ENCODE measurements at regions of chr6 and their contacts with region 1.

Region 1: GRCh38 chr6:142301651-142302370 is at the start of gene ADGRG6:
- DNase-seq: peak; percentile 82
- ATAC-seq: peak; percentile 92
- H3K4me3 ChIP-seq: peak within 1 kb of the TSS; percentile 85 to 95 (median 93)
- H3K27ac ChIP-seq: peak within 1 kb of the TSS; percentile 84
- H3K4me1 ChIP-seq: peaks cover 64% of the 10 kb centered on the region
- H3K27me3 ChIP-seq: no peaks in the 10 kb centered on the region; a peak in 1 of 5 replicates
- CTCF ChIP-seq: peak; percentile 84
- EP300 ChIP-seq: 0 out of 4 replicates have a peak, but pooled peaks of 1 of the 2 experiments have one; percentile 26
- POLR2A ChIP-seq: peak; percentile 33 to 87; a peak in 3 of 4 replicates
- RAD21 ChIP-seq: peak; percentile 96
- total RNA-seq, gene ADGRG6: 83.6 and 129 TPM in 2 replicates

Region 2: DNA sequence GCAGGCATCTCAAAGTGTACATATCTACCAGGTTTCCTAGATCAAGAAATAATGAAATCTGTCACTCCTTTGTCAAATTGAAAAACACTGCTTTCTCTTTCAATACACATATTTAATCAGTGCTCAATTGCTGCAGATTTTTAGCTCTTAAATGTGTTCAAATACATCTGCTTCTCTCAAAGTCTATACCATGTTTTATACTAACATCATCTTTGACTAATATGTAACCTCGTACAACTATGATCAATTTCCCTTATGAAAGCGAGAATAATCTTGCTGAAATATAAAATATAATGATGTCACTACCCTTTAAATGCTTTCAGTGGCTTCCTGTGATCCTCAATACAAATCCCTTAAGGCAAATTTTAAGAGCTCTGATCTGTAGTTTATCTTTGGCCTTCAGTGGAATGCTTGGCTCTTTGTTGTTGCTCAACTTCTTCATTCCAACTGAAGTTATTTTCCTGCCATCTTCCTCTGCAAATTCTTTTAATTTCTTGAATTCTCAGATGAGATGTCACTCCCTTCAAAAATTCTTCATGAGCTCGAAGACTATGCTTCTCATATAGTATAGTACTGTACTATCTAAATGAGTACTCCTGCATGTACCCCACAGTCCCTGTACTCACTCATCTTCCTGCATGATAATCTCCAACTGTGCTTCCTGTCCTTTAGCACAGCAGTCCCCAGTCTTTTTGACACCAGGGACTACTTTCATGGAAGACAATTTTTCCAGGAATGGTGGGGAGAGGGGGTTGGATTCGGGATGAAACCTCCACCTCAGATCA is 714.1 kb before region 1 on chr6:
- CTCF ChIA-PET with region 1: no interaction called
- POLR2A ChIA-PET with region 1: no interaction called
- in situ Hi-C with region 1: no loop called
- intact Hi-C with region 1: no loop called
- DNase-seq: no peak
- ATAC-seq: no peak
- H3K4me3 ChIP-seq: no peak overlapping the region
- H3K27ac ChIP-seq: no peak overlapping the region
- H3K4me1 ChIP-seq: no peaks in the 10 kb centered on the region
- H3K27me3 ChIP-seq: no peaks in the 10 kb centered on the region
- CTCF ChIP-seq: no peak
- EP300 ChIP-seq: no peak
- POLR2A ChIP-seq: no peak
- RAD21 ChIP-seq: no peak

Region 3: GRCh38 chr6:142236691-142237090 is 65.1 kb before region 1 on chr6:
- CTCF ChIA-PET with region 1: interaction called, 7 read pairs
- POLR2A ChIA-PET with region 1: interaction called, 25 read pairs
- in situ Hi-C with region 1: loop called (anchors 5 kb)
- intact Hi-C with region 1: loop called (anchors 1 kb)
- DNase-seq: no peak
- ATAC-seq: no peak
- H3K4me3 ChIP-seq: no peak overlapping the region
- H3K27ac ChIP-seq: no peak overlapping the region
- H3K4me1 ChIP-seq: peaks cover 26% of the 10 kb centered on the region
- H3K27me3 ChIP-seq: no peaks in the 10 kb centered on the region
- CTCF ChIP-seq: no peak
- EP300 ChIP-seq: no peak
- POLR2A ChIP-seq: no peak
- RAD21 ChIP-seq: no peak

Region 4: DNA sequence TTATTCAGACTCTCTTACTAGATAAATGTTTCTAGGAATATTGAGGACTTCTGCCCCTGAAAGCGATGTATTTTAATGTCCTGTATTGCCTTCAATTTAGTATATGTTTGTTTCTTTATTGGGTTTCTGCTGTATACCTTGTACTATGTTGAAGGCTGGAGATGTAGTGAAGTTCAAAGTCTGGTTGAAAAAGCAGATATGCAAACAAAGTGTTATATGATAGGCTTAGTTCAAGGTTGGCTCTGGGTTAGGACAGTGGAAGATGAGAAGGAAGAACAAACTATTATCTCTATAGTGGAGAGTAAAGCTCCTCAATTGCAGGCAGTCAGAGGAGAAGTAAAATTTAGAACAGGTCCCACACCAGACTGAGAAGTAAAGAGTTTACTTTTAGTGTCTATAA is 36.3 kb before region 1 on chr6:
- CTCF ChIA-PET with region 1: no interaction called
- POLR2A ChIA-PET with region 1: interaction called, 43 read pairs
- in situ Hi-C with region 1: no loop called
- intact Hi-C with region 1: loop called (anchors 1 kb)
- DNase-seq: peak; percentile 96
- ATAC-seq: peak; percentile 99
- H3K4me3 ChIP-seq: peak overlapping the region in 2 of 3 experiments; percentile 18 to 36; a peak in 1 of 6 replicates
- H3K27ac ChIP-seq: peak overlapping the region; percentile 38
- H3K4me1 ChIP-seq: peaks cover 48% of the 10 kb centered on the region
- H3K27me3 ChIP-seq: no peaks in the 10 kb centered on the region
- CTCF ChIP-seq: no peak
- EP300 ChIP-seq: peak in 1 of 2 experiments; percentile 96; a peak in 2 of 4 replicates
- POLR2A ChIP-seq: no peak
- RAD21 ChIP-seq: peak; percentile 28; the same call in 1 of the 2 replicates

Region 5: GRCh38 chr6:142285235-142286087 is 16.4 kb before region 1 on chr6:
- CTCF ChIA-PET with region 1: no interaction called
- POLR2A ChIA-PET with region 1: interaction called, 58 read pairs
- in situ Hi-C with region 1: no loop called
- intact Hi-C with region 1: loop called (anchors 2 kb)
- DNase-seq: peak; percentile 91
- ATAC-seq: peak; percentile 99
- H3K4me3 ChIP-seq: peak overlapping the region in 2 of 3 experiments; percentile 27 to 55; a peak in 3 of 6 replicates
- H3K27ac ChIP-seq: peak overlapping the region; percentile 84
- H3K4me1 ChIP-seq: peaks cover 43% of the 10 kb centered on the region
- H3K27me3 ChIP-seq: no peaks in the 10 kb centered on the region
- CTCF ChIP-seq: no peak
- EP300 ChIP-seq: peak in 1 of 2 experiments; percentile 88; a peak in 2 of 4 replicates
- POLR2A ChIP-seq: no peak
- RAD21 ChIP-seq: peak; percentile 41; the same call in 1 of the 2 replicates

Region 6: GRCh38 chr6:142323377-142324040 is 21.7 kb after region 1 on chr6:
- CTCF ChIA-PET with region 1: no interaction called
- POLR2A ChIA-PET with region 1: interaction called, 17 read pairs
- in situ Hi-C with region 1: no loop called
- intact Hi-C with region 1: no loop called
- DNase-seq: peak; percentile 96
- ATAC-seq: peak; percentile 91
- H3K4me3 ChIP-seq: no peak overlapping the region
- H3K27ac ChIP-seq: peak overlapping the region; percentile 21
- H3K4me1 ChIP-seq: peaks cover 81% of the 10 kb centered on the region
- H3K27me3 ChIP-seq: no peaks in the 10 kb centered on the region
- CTCF ChIP-seq: no peak
- EP300 ChIP-seq: peak; percentile 59 to 86; a peak in 2 of 4 replicates
- POLR2A ChIP-seq: no peak
- RAD21 ChIP-seq: no peak; the same call in 1 of the 2 replicates

Region 7: DNA sequence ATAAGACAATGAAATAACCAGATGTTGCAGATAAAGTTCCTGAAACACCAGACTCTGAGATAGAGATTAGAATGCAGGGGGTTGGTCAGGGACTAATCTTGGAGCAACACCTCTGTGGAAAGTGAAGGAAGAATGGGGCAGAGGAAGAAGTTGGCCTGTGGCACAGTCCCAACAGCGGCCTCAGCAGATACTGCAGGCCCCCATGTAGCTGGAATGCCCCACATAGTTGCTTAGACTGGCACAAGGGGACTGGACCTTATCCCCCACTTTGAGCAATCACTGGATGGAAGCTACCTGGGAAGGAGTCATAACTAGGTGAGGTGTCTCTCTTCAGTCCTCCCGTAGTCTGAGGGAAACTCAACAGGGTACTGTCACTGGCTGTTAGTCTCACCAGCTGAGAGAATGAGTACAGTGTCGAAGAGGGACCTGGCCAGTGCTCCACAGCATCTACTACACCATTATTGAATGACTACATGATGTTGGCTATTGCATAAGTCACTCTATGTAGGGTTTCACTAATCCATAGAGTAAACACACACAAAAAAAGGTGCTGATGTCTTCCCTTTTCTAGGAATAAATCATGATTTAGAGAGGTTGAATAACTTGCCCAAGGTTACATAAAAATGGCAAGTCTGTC is 47.5 kb after region 1 on chr6:
- CTCF ChIA-PET with region 1: no interaction called
- POLR2A ChIA-PET with region 1: interaction called, 3 read pairs
- in situ Hi-C with region 1: no loop called
- intact Hi-C with region 1: loop called (anchors 1 kb)
- DNase-seq: peak; percentile 67
- ATAC-seq: peak; percentile 94
- H3K4me3 ChIP-seq: no peak overlapping the region
- H3K27ac ChIP-seq: no peak overlapping the region
- H3K4me1 ChIP-seq: peaks cover 31% of the 10 kb centered on the region
- H3K27me3 ChIP-seq: no peaks in the 10 kb centered on the region
- CTCF ChIP-seq: no peak
- EP300 ChIP-seq: peak in 1 of 2 experiments; percentile 65; a peak in 1 of 4 replicates
- POLR2A ChIP-seq: no peak
- RAD21 ChIP-seq: no peak

Region 8: DNA sequence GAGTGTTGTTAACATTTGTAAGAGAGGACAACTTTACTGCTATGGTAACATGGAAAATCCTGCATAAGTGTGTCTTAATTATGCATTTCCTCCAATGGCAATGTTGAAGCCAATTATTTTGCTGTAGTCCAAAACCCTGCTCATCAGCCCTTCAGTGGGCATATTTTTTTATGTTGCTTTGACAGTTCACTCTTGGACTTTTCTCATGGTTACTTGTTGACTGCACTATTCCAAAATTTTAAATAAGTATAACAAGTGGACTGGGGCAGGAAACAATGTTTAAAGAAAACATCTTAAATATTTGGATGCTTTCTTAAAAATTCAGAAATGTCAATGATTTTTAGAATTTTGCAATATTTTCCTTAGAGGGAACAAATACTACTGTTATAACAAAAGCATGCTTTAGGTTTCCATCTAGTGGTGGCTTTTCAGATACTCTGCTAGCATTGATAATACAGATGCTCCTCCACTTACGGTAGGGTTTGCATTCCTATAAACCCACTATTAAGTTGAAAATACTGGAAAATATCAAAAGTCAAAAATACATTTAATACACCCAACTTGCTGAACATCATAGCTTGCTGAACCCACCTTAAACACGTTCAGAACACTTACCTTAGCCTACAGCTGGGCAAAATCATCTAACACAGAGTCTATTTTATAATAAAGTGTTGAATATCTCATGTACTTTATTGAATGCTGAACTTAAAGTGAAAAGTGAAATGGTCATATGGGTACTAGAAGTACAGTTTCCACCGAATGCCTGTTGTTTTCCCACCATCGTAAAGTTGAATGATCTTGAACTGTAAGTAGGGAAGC is 86.4 kb after region 1 on chr6:
- CTCF ChIA-PET with region 1: interaction called, 15 read pairs
- POLR2A ChIA-PET with region 1: interaction called, 8 read pairs
- in situ Hi-C with region 1: no loop called
- intact Hi-C with region 1: loop called (anchors 1 kb)
- DNase-seq: peak; percentile 73
- ATAC-seq: peak; percentile 92
- H3K4me3 ChIP-seq: no peak overlapping the region
- H3K27ac ChIP-seq: no peak overlapping the region
- H3K4me1 ChIP-seq: peaks cover 31% of the 10 kb centered on the region
- H3K27me3 ChIP-seq: no peaks in the 10 kb centered on the region
- CTCF ChIP-seq: peak; percentile 76
- EP300 ChIP-seq: no peak
- POLR2A ChIP-seq: no peak
- RAD21 ChIP-seq: peak; percentile 85

Measured in HepG2 (cell line).